ENCODE measurements at regions of chr7 and their contacts with region 1.

Region 1: DNA sequence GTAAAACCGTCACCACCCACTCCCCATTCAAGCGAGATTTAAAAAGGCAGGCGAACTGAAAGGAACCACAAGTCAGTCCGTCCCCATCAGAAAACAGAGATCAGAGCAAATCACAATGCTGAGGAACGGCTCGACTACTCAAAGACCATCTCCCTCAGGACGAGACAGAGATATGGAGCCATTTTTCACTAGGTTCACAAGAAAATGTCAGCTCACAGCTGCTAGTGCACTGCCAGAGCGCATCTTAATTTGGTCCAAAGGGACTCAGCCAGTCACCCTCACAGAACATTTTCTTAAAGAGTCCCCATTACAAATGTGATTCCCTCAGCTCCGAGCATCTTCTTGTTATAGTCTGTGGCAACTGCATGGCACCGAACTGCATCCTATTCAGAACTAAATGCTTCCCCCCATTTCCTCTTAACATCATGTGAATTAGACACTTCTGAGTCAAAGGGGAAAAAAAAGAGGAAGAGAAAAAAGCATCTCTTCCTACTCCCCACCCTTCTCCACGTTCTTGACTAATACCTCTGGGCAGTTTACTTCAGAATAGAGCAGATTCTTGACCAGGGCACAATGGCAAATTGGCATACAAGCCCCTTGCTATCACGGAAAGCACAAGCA is 683.9 kb downstream of the MAGI2 start:
- DNase-seq: peak in 3 of 10 donors; percentile 7 to 25 (median 20)
- H3K4me3 ChIP-seq: peak overlapping the region; percentile 41 to 80 (median 65)
- H3K27ac ChIP-seq: peak overlapping the region in 58 of 59 donors; percentile 46 to 93 (median 85)
- H3K27me3 ChIP-seq: no peaks in the 10 kb centered on the region
- CTCF ChIP-seq: no peak

Region 2: GRCh38 chr7:78510580-78511188 is 258.9 kb before region 1 on chr7:
- intact Hi-C with region 1: loop called (anchors 5 to 10 kb)
- DNase-seq: peak in 5 of 10 donors; percentile 38 to 47 (median 44)
- H3K4me3 ChIP-seq: no peak overlapping the region
- H3K27ac ChIP-seq: peak overlapping the region in 8 of 59 donors; percentile 9 to 52 (median 32)
- H3K27me3 ChIP-seq: no peaks in the 10 kb centered on the region
- CTCF ChIP-seq: peak; percentile 36 to 92 (median 68)

Region 3: GRCh38 chr7:78562191-78562590 is 207.4 kb before region 1 on chr7:
- intact Hi-C with region 1: loop called in 1 of 2 experiments (anchors 10 kb)
- DNase-seq: no peak
- H3K4me3 ChIP-seq: no peak overlapping the region
- H3K27ac ChIP-seq: peak overlapping the region in 38 of 59 donors; percentile 1 to 86 (median 34)
- H3K27me3 ChIP-seq: no peaks in the 10 kb centered on the region
- CTCF ChIP-seq: no peak

Region 4: DNA sequence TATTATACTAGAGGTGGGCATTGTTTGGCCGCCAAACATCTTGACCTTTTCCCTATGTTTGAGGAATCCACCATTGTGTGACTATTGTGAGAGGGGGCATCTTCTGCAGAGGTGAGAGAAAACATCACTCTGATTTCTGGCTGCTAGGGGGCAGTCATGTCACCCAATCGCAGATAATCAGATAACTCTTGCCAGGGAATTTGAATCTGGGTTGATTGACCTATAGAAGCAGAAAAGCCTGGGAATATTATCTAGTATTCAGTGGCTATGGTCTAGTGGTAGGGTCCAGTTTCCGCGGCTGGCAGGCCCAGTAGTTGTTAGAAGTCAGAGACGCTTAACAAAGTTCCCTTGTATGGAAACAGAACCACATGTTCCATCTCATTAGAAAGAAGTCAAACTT is 162.5 kb before region 1 on chr7:
- intact Hi-C with region 1: loop called (anchors 5 to 10 kb)
- DNase-seq: peak in 2 of 10 donors; percentile 26 to 31
- H3K4me3 ChIP-seq: no peak overlapping the region
- H3K27ac ChIP-seq: peak overlapping the region in 17 of 59 donors; percentile 0 to 56 (median 26)
- H3K27me3 ChIP-seq: no peaks in the 10 kb centered on the region
- CTCF ChIP-seq: peak in 54 of 56 donors; percentile 11 to 65 (median 46)

Region 5: GRCh38 chr7:78634093-78634492 is 135.5 kb before region 1 on chr7:
- intact Hi-C with region 1: loop called in 1 of 2 experiments (anchors 10 kb)
- DNase-seq: no peak
- H3K4me3 ChIP-seq: peak overlapping the region in 2 of 59 donors; percentile 14 to 35
- H3K27ac ChIP-seq: peak overlapping the region in 47 of 59 donors; percentile 1 to 83 (median 57)
- H3K27me3 ChIP-seq: no peaks in the 10 kb centered on the region
- CTCF ChIP-seq: no peak